ENCODE measurements at regions of chr9 and their contacts with region 1.

Region 1: GRCh38 chr9:122011818-122012498 is 81.2 kb downstream of the TTLL11 start:
- DNase-seq: no peak
- ATAC-seq: no peak
- H3K4me3 ChIP-seq: no peak overlapping the region
- H3K27ac ChIP-seq: no peak overlapping the region
- H3K4me1 ChIP-seq: no peaks in the 10 kb centered on the region; the same call in 1 of the 2 replicates
- H3K27me3 ChIP-seq: no peaks in the 10 kb centered on the region
- CTCF ChIP-seq: no peak
- POLR2A ChIP-seq: no peak
- RAD21 ChIP-seq: no peak

Region 2: GRCh38 chr9:121538246-121538645 is 473.7 kb before region 1 on chr9:
- CTCF ChIA-PET with region 1: no interaction called
- POLR2A ChIA-PET with region 1: no interaction called
- dilution Hi-C with region 1: no loop called
- in situ Hi-C with region 1: no loop called
- intact Hi-C with region 1: loop called (anchors 5 kb)
- DNase-seq: no peak
- ATAC-seq: no peak
- H3K4me3 ChIP-seq: no peak overlapping the region
- H3K27ac ChIP-seq: no peak overlapping the region
- H3K4me1 ChIP-seq: no peaks in the 10 kb centered on the region
- H3K27me3 ChIP-seq: peaks cover 25% of the 10 kb centered on the region
- CTCF ChIP-seq: no peak
- POLR2A ChIP-seq: no peak
- RAD21 ChIP-seq: no peak

Measured in IMR-90 (cell line).